GM12878 (cell line): ENCODE measurements at regions of chr1 and their contacts with region 1.

Region 1: DNA sequence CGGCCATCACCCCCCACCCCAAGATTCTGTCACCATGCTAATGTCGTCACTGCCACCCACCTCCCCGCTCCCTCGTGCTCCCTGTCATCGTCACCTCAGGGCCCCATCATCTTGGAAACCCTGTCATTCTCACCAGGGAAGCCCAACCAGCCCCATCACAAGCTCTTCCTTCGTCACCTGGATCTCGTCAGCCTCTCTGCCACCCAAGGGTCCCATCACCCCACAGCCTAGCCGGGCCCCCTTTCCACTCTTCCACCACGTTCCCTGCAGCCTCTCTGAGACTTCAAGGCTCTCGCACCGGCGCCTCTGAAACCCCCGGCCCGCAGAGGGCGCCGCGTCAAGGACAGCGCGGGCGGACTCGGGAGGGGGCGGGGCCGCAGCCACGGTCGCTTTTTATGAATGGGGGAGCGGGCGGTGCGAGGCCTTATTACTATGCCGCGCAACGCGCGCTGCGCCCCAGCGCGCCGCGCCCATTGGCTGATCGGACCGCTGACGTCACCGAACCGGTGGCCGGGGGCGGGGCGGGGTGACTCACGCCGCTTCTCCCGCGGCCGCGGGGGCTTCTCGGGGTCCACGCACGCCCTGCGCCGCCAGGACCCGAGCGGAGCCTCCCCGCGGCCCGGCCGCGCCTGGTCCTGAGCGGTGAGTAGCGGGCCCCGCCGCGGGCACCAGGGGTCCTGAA is at the start of gene GPR3:
- DNase-seq: no peak
- ATAC-seq: peak; percentile 89
- H3K4me3 ChIP-seq: peak within 1 kb of the TSS; percentile 71
- H3K27ac ChIP-seq: no peak within 1 kb of the TSS
- H3K4me1 ChIP-seq: peaks cover 8% of the 10 kb centered on the region
- H3K27me3 ChIP-seq: no peaks in the 10 kb centered on the region
- CTCF ChIP-seq: peak; percentile 47 to 61 (median 52)
- EP300 ChIP-seq: no peak
- POLR2A ChIP-seq: no peak
- RAD21 ChIP-seq: peak; percentile 31
- polyA plus RNA-seq, gene GPR3: not detected

Region 2: GRCh38 chr1:27102707-27103491 is 289.3 kb before region 1 on chr1:
- CTCF ChIA-PET with region 1: interaction called, 11 read pairs
- POLR2A ChIA-PET with region 1: no interaction called
- RAD21 ChIA-PET with region 1: interaction called, 6 read pairs
- SMC1A ChIA-PET with region 1: no interaction called
- in situ Hi-C with region 1: loop called (anchors 5 kb)
- intact Hi-C with region 1: loop called (anchors 2 kb)
- DNase-seq: no peak
- ATAC-seq: peak; percentile 73
- H3K4me3 ChIP-seq: no peak overlapping the region
- H3K27ac ChIP-seq: no peak overlapping the region
- H3K4me1 ChIP-seq: peaks cover 24% of the 10 kb centered on the region
- H3K27me3 ChIP-seq: no peaks in the 10 kb centered on the region
- CTCF ChIP-seq: peak; percentile 95 to 98 (median 97)
- EP300 ChIP-seq: no peak
- POLR2A ChIP-seq: no peak
- RAD21 ChIP-seq: peak; percentile 95

Region 3: DNA sequence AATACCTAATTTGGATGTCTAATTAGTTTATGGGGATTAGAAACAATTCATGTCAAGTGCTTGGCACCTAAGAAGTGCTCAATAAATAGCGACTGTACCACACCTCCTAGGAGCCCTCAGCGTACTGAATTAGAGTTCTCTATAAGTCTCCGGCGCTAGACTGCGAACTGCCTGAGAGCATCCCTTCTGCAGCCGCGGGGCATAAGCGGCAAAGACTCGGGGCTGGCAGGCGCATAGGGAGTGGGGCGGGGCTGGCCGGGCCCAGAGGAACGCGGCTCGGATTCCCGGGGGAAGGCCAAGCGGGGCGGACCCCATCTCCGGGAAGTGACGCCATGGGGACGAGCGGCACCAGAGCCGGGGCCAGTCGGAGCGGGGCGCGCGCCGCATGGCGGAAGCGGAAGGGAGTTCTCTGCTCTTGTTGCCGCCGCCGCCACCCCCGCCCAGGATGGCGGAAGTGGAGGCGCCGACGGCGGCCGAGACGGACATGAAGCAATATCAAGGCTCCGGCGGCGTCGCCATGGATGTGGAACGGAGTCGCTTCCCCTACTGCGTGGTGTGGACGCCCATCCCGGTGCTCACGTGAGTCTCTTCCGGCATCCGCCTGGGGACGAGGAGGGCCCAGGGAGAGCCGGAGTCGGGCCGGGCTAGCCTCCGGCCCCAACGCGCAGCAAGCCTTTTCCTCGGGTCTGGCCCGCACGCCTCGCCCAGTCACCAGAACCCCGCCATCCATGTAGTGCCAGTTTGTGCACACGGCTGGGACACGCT is 70.2 kb before region 1 on chr1 and contains the start of gene TMEM222:
- CTCF ChIA-PET with region 1: interaction called, 10 read pairs
- POLR2A ChIA-PET with region 1: no interaction called
- RAD21 ChIA-PET with region 1: no interaction called
- SMC1A ChIA-PET with region 1: interaction called, 3 read pairs
- in situ Hi-C with region 1: no loop called
- intact Hi-C with region 1: no loop called
- DNase-seq: peak; percentile 76
- ATAC-seq: peak; percentile 98
- H3K4me3 ChIP-seq: peak within 1 kb of the TSS; percentile 95
- H3K27ac ChIP-seq: peak within 1 kb of the TSS; percentile 96
- H3K4me1 ChIP-seq: no peaks in the 10 kb centered on the region
- H3K27me3 ChIP-seq: no peaks in the 10 kb centered on the region
- CTCF ChIP-seq: no peak
- EP300 ChIP-seq: peak in 1 of 2 experiments; percentile 63; a peak in 2 of 4 replicates
- POLR2A ChIP-seq: peak; percentile 93
- RAD21 ChIP-seq: no peak
- polyA plus RNA-seq, gene TMEM222: 3.8 to 7.8 TPM

Region 4: GRCh38 chr1:27346991-27347627 is 45.1 kb before region 1 on chr1:
- CTCF ChIA-PET with region 1: interaction called, 126 read pairs
- POLR2A ChIA-PET with region 1: no interaction called
- RAD21 ChIA-PET with region 1: interaction called, 3 read pairs
- SMC1A ChIA-PET with region 1: interaction called, 4 read pairs
- in situ Hi-C with region 1: no loop called
- intact Hi-C with region 1: no loop called
- DNase-seq: no peak
- ATAC-seq: no peak
- H3K4me3 ChIP-seq: no peak overlapping the region
- H3K27ac ChIP-seq: no peak overlapping the region
- H3K4me1 ChIP-seq: peaks cover 18% of the 10 kb centered on the region
- H3K27me3 ChIP-seq: no peaks in the 10 kb centered on the region
- CTCF ChIP-seq: no peak
- EP300 ChIP-seq: no peak
- POLR2A ChIP-seq: no peak
- RAD21 ChIP-seq: no peak

Region 5: GRCh38 chr1:27365372-27366112 is 26.7 kb before region 1 on chr1:
- CTCF ChIA-PET with region 1: interaction called, 126 read pairs
- POLR2A ChIA-PET with region 1: interaction called, 3 read pairs
- RAD21 ChIA-PET with region 1: interaction called, 16 read pairs
- SMC1A ChIA-PET with region 1: interaction called, 27 read pairs
- in situ Hi-C with region 1: no loop called
- intact Hi-C with region 1: no loop called
- DNase-seq: no peak
- ATAC-seq: peak; percentile 83
- H3K4me3 ChIP-seq: peak overlapping the region; percentile 76
- H3K27ac ChIP-seq: no peak overlapping the region
- H3K4me1 ChIP-seq: peaks cover 15% of the 10 kb centered on the region
- H3K27me3 ChIP-seq: no peaks in the 10 kb centered on the region
- CTCF ChIP-seq: no peak
- EP300 ChIP-seq: 0 out of 4 replicates have a peak, but pooled peaks of 1 of the 2 experiments have one; percentile 18
- POLR2A ChIP-seq: peak; percentile 50
- RAD21 ChIP-seq: no peak

Region 6: DNA sequence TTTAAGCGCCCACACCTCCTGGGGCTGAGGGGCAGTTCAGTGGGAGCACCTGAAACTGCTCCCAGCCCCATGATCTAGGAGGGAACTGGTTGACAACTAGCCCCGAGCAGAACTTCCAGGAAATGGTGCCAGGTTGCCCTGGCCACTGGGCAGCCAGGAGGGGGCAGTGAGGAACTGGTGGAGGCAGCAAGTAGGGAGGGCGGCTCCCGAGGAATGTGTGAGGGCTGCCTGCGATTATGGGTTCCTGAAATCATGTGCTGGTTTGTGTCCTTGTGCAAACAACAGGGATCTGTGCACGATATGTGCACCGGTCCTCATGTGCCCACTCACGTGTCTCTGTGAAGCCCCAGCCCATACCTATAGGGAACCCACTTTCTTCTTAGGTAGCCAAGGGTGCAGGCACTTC is 10.1 kb after region 1 on chr1:
- CTCF ChIA-PET with region 1: interaction called, 16 read pairs
- POLR2A ChIA-PET with region 1: no interaction called
- RAD21 ChIA-PET with region 1: no interaction called
- SMC1A ChIA-PET with region 1: interaction called, 3 read pairs
- in situ Hi-C with region 1: no loop called
- intact Hi-C with region 1: no loop called
- DNase-seq: no peak
- ATAC-seq: peak; percentile 31
- H3K4me3 ChIP-seq: no peak overlapping the region
- H3K27ac ChIP-seq: no peak overlapping the region
- H3K4me1 ChIP-seq: peaks cover 16% of the 10 kb centered on the region
- H3K27me3 ChIP-seq: no peaks in the 10 kb centered on the region
- CTCF ChIP-seq: peak; percentile 37 to 48 (median 43); a peak in 4 of 6 replicates
- EP300 ChIP-seq: no peak
- POLR2A ChIP-seq: 0 out of 2 replicates have a peak, but pooled peaks have one; percentile 37
- RAD21 ChIP-seq: peak; percentile 55

Region 7: DNA sequence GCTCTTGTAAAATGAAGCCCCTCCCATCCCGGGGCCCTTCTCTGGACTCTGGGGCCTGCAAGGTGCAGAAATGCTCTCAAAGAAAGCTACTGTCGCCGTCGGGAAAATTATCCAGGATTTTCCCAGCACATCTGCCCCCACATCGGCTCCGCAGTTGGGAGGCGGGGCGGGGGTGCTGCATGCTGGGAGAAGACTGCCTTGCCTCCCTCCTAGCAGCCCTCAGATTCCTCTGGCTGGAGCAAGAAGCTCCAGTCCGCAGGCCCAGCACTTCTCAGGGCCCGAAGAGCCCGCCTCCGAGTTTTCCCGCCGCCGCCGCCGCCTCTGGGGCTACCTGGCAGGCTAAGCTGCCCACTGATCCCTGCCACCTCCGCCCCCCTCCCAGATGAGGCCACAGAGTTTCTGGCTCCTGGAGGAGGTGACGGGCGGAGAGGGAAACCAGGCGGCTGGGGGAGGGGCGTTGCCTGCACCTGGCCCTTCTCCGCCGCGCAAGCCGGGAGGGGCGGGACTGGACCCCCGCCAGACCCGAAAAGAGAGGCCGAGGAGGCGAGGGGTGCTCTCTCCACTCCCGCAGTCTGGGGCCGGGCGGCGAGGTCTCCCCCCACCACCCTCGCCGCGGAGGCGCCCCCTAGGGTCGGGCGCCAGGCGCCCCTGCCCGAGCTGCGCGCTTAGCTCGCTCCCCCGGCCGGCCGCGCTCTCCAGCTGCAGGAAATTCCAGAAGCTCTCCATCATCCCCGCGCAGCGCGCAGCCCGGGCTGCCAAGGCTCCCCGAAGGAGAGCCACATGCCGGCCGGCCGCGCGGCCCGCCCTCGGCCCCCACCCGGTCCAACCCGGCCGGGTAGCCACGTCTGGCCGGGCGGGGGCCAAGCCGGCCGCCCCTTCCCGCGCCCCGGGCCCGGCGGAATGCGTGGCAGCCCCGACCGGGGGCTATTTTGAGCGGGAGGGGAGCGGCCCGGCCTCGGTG is 182.9 kb after region 1 on chr1:
- CTCF ChIA-PET with region 1: no interaction called
- POLR2A ChIA-PET with region 1: no interaction called
- RAD21 ChIA-PET with region 1: no interaction called
- SMC1A ChIA-PET with region 1: no interaction called
- in situ Hi-C with region 1: no loop called
- intact Hi-C with region 1: no loop called
- DNase-seq: no peak
- ATAC-seq: peak; percentile 24; the same call in 2 of the 3 replicates
- H3K4me3 ChIP-seq: no peak overlapping the region
- H3K27ac ChIP-seq: no peak overlapping the region
- H3K4me1 ChIP-seq: no peaks in the 10 kb centered on the region; the same call in 1 of the 2 replicates
- H3K27me3 ChIP-seq: no peaks in the 10 kb centered on the region
- CTCF ChIP-seq: peak in 2 of 3 experiments; percentile 9 to 12; a peak in 1 of 6 replicates
- EP300 ChIP-seq: no peak
- POLR2A ChIP-seq: no peak
- RAD21 ChIP-seq: no peak